Activated CD4-positive, alpha-beta T cell treated with anti-CD3 and anti-CD28 coated beads for 36 hours (primary cell): ENCODE measurements at regions of chr7 and their contacts with region 1.

Region 1: GRCh38 chr7:26187380-26188205 is 13.0 kb downstream of the HNRNPA2B1 start:
- DNase-seq: no peak
- ATAC-seq: peak; percentile 21
- H3K4me3 Mint-ChIP-seq: peak overlapping the region; percentile 14
- H3K27ac Mint-ChIP-seq: peak overlapping the region; percentile 77
- H3K4me1 Mint-ChIP-seq: peaks cover 68% of the 10 kb centered on the region
- H3K27me3 Mint-ChIP-seq: no peaks in the 10 kb centered on the region

Region 2: GRCh38 chr7:26013551-26014083 is 174.0 kb before region 1 on chr7:
- CTCF ChIA-PET with region 1: no interaction called
- POLR2A ChIA-PET with region 1: no interaction called
- intact Hi-C with region 1: no loop called
- DNase-seq: no peak
- ATAC-seq: no peak
- H3K4me3 Mint-ChIP-seq: no peak overlapping the region
- H3K27ac Mint-ChIP-seq: no peak overlapping the region
- H3K4me1 Mint-ChIP-seq: no peaks in the 10 kb centered on the region
- H3K27me3 Mint-ChIP-seq: peaks cover 18% of the 10 kb centered on the region

Region 3: GRCh38 chr7:26160881-26161280 is 26.7 kb before region 1 on chr7:
- CTCF ChIA-PET with region 1: interaction called, 9 read pairs
- POLR2A ChIA-PET with region 1: interaction called, 28 read pairs
- intact Hi-C with region 1: loop called in 1 of 2 experiments (anchors 2 kb)
- DNase-seq: no peak
- ATAC-seq: no peak
- H3K4me3 Mint-ChIP-seq: no peak overlapping the region
- H3K27ac Mint-ChIP-seq: no peak overlapping the region
- H3K4me1 Mint-ChIP-seq: peaks cover 64% of the 10 kb centered on the region
- H3K27me3 Mint-ChIP-seq: no peaks in the 10 kb centered on the region

Region 4: GRCh38 chr7:26167301-26167934 is 20.2 kb before region 1 on chr7:
- CTCF ChIA-PET with region 1: interaction called, 5 read pairs
- POLR2A ChIA-PET with region 1: interaction called, 25 read pairs
- intact Hi-C with region 1: loop called in 1 of 2 experiments (anchors 2 kb)
- DNase-seq: peak; percentile 68
- ATAC-seq: peak; percentile 88
- H3K4me3 Mint-ChIP-seq: peak overlapping the region; percentile 29
- H3K27ac Mint-ChIP-seq: peak overlapping the region; percentile 93
- H3K4me1 Mint-ChIP-seq: peaks cover 33% of the 10 kb centered on the region
- H3K27me3 Mint-ChIP-seq: no peaks in the 10 kb centered on the region